GM23248 (cell line): ENCODE measurements at regions of chr10 and their contacts with region 1.

Region 1: DNA sequence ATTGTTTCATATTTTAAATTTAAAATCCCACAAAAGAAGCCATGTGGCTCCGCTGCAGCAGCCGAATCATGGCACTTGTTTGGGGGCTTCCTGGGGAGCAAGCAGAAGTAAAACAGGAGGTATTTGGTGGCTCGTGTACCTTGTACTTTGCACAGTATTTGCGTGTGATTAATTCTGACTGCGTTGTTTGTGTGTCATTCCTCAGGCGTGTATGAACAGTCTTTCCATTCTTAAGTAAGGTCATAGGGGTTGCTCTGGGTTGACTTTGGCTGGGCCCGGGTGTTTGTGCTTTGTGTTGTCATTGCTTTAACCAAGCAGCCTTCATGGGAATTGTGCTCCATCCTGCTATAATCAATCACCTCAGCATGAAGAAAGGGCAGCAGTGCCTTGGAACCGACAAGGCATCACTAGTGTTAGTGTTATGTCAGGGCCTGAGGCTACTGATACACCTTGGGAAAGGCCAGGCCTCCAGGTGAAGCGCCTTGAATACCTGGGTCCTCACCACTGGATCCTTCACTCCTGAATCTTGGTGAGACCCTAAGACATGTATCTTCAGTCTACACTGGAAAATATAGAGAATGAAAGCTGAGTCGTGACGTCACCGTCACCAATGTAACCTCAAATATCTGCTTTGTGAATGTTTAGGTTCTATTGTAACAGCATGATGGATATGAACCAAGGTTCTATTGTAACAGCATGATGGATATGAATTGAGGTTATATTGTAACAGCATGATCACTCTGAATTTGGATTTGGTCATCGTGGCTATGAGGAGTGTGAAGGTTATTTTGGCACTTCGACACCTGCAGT is 182.2 kb downstream of the ARHGAP21 start:
- DNase-seq: no peak
- H3K4me3 ChIP-seq: no peak overlapping the region
- H3K27ac ChIP-seq: no peak overlapping the region
- H3K4me1 ChIP-seq: no peaks in the 10 kb centered on the region
- H3K27me3 ChIP-seq: no peaks in the 10 kb centered on the region

Region 2: GRCh38 chr10:23525406-23525805 is 1016.0 kb before region 1 on chr10:
- in situ Hi-C with region 1: loop called (anchors 25 kb)
- DNase-seq: peak; percentile 40
- H3K4me3 ChIP-seq: no peak overlapping the region
- H3K27ac ChIP-seq: no peak overlapping the region
- H3K4me1 ChIP-seq: no peaks in the 10 kb centered on the region
- H3K27me3 ChIP-seq: no peaks in the 10 kb centered on the region; the same call in 1 of the 2 replicates

Region 3: DNA sequence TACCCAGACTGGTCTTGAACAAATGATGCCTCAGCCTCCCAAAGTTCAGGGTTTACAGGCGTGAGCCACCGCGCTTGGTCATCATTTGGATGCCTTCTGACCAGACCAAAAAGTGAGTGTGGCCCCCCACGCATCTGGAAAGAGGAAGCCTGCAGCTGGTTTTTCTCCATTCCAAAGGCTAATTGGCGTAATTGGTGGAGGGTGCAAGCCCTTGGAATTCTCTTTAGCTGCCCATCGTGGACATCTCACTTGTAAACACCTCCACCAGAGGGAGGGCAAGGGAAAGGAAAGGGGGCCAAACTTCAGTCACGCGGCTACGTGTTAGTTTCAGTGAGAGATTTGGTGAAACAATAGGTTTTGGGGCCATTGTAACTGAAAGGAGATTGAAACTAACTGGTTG is 186.3 kb after region 1 on chr10:
- in situ Hi-C with region 1: no loop called
- DNase-seq: peak; percentile 22
- H3K4me3 ChIP-seq: no peak overlapping the region
- H3K27ac ChIP-seq: no peak overlapping the region
- H3K4me1 ChIP-seq: 0 out of 2 replicates have a peak, but pooled peaks cover 4% of the 10 kb centered on the region
- H3K27me3 ChIP-seq: no peaks in the 10 kb centered on the region